Left cardiac atrium (tissue), 4 donors: ENCODE measurements at regions of chr1 and their contacts with region 1.

Region 1: GRCh38 chr1:56709269-56709880 is 64.3 kb downstream of the PRKAA2 start:
- DNase-seq: no peak
- ATAC-seq: peak; percentile 65

Region 2: DNA sequence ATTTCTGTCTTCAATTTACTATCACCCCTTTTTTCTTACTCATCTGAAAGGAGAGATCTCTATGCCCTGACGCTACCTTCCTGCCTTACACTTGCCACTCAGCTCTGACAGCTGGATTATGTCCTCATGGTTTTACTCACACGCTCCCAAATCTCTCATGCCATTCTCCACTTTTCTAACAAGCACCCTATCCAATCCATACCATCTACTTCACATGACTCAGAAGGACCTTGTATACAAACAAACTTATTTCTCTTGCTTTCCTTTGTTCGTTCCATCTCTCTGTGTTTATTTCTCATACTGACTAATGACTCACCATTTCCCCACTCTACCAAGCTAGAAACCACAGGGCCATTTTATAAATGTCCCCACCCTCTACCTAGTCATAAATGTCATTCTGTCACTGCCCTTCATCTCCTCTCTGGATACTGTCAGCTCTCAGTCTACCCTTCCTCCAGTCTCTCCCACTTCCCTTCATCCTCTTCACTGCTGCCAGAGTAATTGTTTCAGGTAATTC is 1581.5 kb before region 1 on chr1:
- intact Hi-C with region 1: loop called in 1 of 2 experiments (anchors 10 kb)
- DNase-seq: no peak
- ATAC-seq: no peak

Region 3: GRCh38 chr1:56434740-56435139 is 274.6 kb before region 1 on chr1:
- intact Hi-C with region 1: no loop called
- DNase-seq: no peak
- ATAC-seq: no peak

Region 4: DNA sequence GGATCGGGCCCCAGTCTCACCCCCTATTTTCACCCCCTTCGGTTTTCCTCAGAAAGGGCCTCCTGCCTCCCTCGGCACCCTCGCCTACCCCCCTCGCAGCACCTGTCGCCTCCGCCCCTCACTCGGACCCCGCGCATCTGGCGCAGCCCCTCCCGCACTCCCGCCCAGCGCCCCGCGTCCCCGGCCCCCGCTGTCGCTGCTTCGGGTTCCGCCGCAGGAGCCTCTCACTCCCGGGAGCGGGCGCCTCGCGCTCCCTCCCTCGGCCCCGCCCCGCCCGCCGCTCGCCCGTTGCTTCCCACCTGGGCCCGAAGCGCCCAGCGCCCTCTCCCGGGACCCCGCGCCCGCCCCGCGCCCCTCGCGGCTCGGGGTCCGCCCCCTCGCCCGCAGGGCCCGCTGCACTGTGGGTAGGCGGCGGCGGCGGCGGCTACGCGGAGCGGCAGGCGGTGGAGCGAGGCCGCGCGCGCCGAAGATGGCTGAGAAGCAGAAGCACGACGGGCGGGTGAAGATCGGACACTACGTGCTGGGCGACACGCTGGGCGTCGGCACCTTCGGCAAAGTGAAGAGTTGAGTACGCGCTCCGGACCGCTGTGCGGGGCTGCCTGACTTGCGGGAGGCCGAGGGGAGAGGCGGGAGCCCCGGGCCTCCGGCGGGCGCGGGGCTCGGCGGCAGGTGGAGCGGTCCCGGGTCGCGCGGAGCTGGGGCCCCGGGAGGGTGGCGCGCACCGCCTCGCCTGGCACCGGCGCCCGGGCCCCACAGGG is 64.3 kb before region 1 on chr1 and contains the start of gene PRKAA2:
- intact Hi-C with region 1: loop called in 1 of 2 experiments (anchors 10 kb)
- DNase-seq: peak; percentile 60
- ATAC-seq: peak; percentile 94 to 95
- total RNA-seq, gene PRKAA2: 49.7 to 53.2 TPM